ENCODE measurements at regions of chr5 and their contacts with region 1.

Region 1: DNA sequence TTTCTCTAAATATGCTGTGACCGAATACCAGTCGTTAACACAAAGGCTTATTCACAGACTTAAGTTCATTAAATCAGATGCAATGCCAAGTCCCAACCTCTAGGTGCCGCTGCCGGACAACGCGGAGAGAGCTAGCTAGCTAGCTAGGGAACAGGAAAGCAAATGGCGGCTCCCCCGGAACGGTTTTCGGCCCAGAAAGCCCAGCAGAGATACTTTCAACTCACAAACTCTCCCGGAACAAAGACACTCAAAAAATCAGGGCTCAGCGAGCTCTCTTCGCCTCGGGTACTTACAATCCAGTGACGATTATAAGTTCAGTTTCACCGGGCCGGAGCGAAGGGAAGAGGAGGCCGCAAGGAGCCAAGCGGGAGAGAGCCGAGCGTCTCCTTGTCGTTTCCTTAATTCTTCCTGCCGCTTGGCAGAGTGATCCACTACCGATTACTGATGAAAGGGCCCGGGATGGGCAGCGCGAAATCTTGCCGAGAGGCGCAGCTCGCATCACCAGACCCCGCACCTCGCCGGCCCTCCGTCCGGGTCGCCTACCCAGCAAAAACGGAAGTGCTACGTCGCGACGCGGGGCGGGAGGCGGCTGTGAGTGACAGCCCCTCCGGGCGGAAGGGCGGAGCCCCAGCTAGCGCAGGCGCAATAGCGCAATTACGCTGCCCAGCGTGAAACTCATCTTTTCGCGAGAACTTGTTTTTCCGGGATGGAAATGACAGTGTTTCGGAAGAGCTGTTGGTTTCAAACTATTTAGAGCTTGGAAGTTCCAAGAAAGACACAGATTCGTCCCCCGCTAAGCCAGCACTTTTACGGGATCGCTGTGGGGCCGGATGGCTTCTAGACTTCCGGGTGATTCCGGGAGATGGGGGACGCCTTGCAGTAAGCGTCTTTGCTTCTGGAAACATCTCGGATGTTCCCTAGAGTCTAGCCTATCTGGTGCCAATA is at the start of gene TAF7:
- DNase-seq: peak; percentile 96
- ATAC-seq: peak; percentile 96
- H3K4me3 Mint-ChIP-seq: peak within 1 kb of the TSS; percentile 91
- H3K27ac Mint-ChIP-seq: peak within 1 kb of the TSS; percentile 100
- H3K4me1 Mint-ChIP-seq: peaks cover 23% of the 10 kb centered on the region
- H3K27me3 Mint-ChIP-seq: peaks cover 2% of the 10 kb centered on the region
- total RNA-seq, gene TAF7: 45.2 to 54.4 TPM

Region 2: GRCh38 chr5:140639148-140639979 is 681.1 kb before region 1 on chr5 and contains the start of gene TMCO6:
- CTCF ChIA-PET with region 1: no interaction called
- POLR2A ChIA-PET with region 1: no interaction called
- intact Hi-C with region 1: loop called in 1 of 2 experiments (anchors 5 kb)
- DNase-seq: peak; percentile 99
- ATAC-seq: peak; percentile 94
- H3K4me3 Mint-ChIP-seq: peak within 1 kb of the TSS; percentile 93
- H3K27ac Mint-ChIP-seq: peak within 1 kb of the TSS; percentile 95
- H3K4me1 Mint-ChIP-seq: peaks cover 39% of the 10 kb centered on the region
- H3K27me3 Mint-ChIP-seq: no peaks in the 10 kb centered on the region
- total RNA-seq, gene TMCO6: 36.5 to 36.6 TPM

Region 3: GRCh38 chr5:140764177-140765020 is 556.1 kb before region 1 on chr5:
- CTCF ChIA-PET with region 1: no interaction called
- POLR2A ChIA-PET with region 1: no interaction called
- intact Hi-C with region 1: loop called in 1 of 2 experiments (anchors 5 kb)
- DNase-seq: no peak
- ATAC-seq: no peak
- H3K4me3 Mint-ChIP-seq: no peak overlapping the region
- H3K27ac Mint-ChIP-seq: no peak overlapping the region
- H3K4me1 Mint-ChIP-seq: no peaks in the 10 kb centered on the region
- H3K27me3 Mint-ChIP-seq: no peaks in the 10 kb centered on the region

Region 4: DNA sequence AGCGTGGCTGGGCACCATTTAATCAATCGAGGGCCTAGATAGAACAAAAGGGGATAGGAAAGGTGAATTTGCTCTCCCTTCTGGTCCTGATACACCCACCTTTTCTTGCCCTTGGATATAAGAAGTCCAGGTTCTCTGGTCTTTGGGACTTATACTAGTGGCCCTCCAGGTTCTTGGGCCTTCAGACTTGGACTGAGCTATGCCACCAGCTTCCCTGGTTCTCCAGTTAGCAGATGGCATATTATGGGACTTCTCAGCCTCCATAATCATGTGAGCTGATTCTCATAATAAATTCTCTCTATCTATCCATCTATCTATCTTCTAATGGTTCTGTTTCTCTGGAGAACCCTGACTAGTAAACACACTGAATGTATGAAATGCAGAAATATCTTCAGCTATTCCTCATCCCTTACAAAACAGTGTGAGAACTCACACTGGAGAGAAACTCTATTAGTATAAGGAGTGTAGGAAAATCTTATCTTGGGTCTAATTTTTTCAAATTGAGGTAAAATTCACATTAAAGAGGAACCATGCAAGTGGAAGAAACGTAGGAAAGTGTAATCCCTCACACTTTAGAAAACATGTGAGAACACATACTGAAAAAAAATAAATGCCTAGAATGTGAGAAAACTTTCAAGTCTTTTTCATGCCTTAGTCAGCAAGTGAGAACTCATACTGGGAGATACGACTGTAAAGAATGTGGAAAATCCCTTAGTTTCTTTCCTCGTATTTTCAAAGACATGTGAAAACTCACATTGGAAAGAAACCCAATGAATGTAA is 59.8 kb before region 1 on chr5:
- CTCF ChIA-PET with region 1: interaction called, 3 read pairs
- POLR2A ChIA-PET with region 1: no interaction called
- intact Hi-C with region 1: loop called in 1 of 2 experiments (anchors 2 kb)
- DNase-seq: no peak
- ATAC-seq: no peak
- H3K4me3 Mint-ChIP-seq: no peak overlapping the region
- H3K27ac Mint-ChIP-seq: no peak overlapping the region
- H3K4me1 Mint-ChIP-seq: no peaks in the 10 kb centered on the region
- H3K27me3 Mint-ChIP-seq: no peaks in the 10 kb centered on the region

Region 5: DNA sequence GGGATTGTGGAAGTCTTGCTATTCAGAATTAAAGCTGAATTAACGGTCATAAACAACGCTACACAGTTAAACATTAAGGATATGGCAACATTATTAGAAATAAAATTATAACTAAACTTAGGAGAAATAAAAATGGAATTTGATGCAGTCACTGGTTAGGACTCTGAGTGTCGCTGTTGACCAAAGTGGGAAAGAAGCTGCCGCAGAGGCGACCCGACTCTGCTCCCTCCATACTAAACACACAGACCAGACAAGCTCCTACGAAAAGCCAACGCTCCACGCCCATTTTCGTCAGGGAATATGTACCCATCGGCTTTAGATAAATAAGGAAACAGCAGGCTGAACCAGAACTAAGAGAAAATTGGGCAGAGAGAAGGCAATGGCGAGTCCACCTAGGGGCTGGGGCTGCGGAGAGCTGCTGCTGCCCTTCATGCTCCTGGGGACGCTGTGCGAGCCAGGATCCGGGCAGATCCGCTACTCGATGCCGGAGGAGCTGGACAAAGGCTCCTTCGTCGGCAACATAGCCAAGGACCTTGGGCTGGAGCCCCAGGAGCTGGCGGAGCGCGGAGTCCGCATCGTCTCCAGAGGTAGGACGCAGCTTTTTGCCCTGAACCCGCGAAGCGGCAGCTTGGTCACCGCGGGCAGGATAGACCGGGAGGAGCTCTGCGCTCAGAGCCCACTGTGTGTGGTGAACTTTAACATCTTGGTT is 43.6 kb after region 1 on chr5 and contains the start of gene PCDHGA5:
- CTCF ChIA-PET with region 1: no interaction called
- POLR2A ChIA-PET with region 1: no interaction called
- intact Hi-C with region 1: no loop called
- DNase-seq: no peak
- ATAC-seq: no peak
- H3K4me3 Mint-ChIP-seq: no peak within 1 kb of the TSS
- H3K27ac Mint-ChIP-seq: no peak within 1 kb of the TSS
- H3K4me1 Mint-ChIP-seq: peaks cover 2% of the 10 kb centered on the region
- H3K27me3 Mint-ChIP-seq: peaks cover 71% of the 10 kb centered on the region
- total RNA-seq, gene PCDHGA5: 0.07 to 0.09 TPM

Region 6: DNA sequence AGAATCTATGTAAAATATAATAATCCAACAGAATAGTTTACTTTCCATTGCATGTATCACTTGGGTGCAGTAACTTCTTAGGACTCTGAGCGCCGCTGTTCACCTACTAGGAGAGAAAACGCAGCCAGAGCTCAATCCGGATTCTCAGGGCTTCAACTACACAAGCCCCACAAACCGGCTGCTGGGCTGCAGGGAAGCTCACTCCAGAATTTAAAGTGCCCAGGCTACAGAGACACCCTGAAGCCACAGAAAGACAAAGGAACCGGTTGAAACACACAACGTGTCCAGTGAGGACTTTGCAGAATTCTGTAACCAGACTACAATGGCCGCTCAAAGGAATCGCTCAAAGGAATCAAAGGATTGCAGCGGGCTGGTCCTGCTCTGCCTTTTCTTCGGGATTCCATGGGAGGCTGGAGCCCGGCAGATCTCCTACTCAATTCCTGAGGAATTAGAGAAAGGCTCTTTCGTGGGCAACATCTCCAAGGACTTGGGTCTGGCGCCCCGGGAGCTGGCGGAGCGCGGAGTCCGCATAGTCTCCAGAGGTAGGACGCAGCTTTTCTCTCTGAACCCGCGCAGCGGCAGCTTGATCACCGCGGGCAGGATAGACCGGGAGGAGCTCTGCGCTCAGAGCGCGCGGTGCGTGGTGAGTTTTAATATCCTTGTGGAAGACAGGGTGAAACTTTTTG is 92.5 kb after region 1 on chr5 and contains the start of gene PCDHGA10:
- CTCF ChIA-PET with region 1: interaction called, 10 read pairs
- POLR2A ChIA-PET with region 1: no interaction called
- intact Hi-C with region 1: no loop called
- DNase-seq: peak; percentile 74
- ATAC-seq: peak; percentile 76
- H3K4me3 Mint-ChIP-seq: peak within 1 kb of the TSS; percentile 62
- H3K27ac Mint-ChIP-seq: no peak within 1 kb of the TSS
- H3K4me1 Mint-ChIP-seq: peaks cover 10% of the 10 kb centered on the region
- H3K27me3 Mint-ChIP-seq: peaks cover 63% of the 10 kb centered on the region
- total RNA-seq, gene PCDHGA10: 0.07 TPM in 1 of 2 experiments, not detected in the other

Region 7: DNA sequence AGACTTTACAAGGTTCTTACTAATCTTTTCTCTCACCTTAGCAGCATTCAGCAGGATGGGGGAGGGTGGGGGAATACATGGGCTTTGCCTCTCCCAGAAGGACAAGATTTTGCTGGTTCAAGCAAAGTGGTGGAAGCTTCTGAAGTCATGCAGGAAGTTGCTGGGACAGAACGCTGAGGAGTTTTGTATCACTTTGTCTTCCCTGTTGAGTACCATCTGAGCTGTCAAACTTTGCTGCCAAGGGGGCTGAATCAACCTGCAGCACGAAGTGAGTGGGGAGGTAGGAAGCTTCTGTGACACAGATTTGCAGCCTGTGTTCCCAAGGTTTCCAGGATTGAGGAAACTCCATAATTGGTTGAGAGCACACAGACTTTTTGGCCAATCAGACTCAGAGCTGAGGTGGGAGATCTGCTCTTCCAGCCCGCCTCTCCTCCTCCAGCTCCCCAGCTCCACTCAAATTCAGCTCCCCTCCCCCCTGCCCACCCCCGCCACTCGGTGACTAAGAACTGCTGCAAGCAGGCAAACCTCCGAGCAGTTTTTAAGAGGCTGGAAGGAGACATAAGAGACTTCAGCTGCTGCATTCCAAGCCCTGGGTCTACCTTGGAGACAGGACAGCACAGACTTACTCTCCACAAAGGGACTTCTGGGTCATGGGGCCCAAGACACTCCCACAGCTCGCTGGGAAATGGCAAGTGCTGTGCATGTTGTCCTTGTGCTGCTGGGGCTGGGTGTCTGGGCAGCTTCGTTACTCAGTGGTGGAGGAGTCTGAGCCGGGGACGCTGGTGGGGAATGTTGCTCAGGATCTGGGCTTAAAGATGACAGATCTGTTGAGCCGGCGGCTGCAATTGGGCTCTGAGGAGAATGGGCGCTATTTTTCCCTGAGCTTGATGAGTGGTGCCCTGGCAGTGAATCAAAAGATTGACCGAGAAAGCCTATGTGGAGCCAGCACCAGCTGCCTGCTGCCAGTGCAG is 168.4 kb after region 1 on chr5 and contains the start of gene PCDHGC5:
- CTCF ChIA-PET with region 1: no interaction called
- POLR2A ChIA-PET with region 1: no interaction called
- intact Hi-C with region 1: no loop called
- DNase-seq: no peak
- ATAC-seq: no peak
- H3K4me3 Mint-ChIP-seq: no peak within 1 kb of the TSS
- H3K27ac Mint-ChIP-seq: no peak within 1 kb of the TSS
- H3K4me1 Mint-ChIP-seq: peaks cover 17% of the 10 kb centered on the region
- H3K27me3 Mint-ChIP-seq: peaks cover 76% of the 10 kb centered on the region
- total RNA-seq, gene PCDHGC5: not detected

Region 8: DNA sequence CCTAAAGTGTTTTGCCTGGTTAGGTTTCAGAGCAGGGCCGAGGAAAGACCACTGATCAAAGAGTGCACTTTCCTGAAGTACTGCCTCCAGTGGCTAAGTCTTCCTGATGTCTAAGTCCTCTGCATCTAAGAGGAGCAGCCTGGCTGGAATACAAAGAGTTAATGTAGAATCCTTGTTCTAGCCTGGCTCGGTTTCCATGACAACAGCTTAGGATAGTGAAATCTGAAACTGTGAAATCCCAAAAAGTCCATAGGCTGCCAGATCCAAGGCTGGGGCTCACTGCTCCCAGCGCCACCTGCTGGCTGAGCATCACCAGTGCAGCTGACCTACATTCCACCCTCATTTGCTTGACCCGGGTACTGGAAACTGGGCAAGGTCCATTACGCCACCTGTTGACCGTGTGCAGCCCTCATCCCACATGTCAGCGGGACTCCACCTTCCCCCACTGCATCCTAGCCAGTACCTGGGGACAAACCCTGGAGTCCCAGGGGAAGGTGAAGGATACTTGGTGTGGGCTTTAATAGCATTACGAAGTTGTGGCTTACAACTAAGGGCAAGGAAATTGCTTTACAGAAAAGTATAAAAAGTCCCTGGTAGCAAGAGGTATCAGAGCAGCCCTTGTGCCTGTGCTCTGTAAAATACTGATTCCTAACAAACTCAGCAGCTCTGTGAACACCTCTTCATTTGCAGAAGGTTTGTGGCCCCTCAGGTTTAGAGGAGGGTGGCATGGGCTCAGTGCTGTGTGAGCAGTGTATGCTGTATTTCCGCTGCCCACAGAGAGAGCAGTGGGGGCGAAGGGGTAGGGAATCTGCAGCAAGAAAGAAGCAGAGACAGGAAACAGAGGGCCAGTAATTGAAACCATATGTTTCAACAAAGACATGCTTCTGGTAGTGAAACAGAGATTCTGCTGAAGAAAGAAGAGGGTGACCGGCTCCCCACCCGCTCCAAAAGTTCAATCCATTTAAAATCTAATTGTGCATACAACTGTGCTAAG is 204.4 kb after region 1 on chr5:
- CTCF ChIA-PET with region 1: interaction called, 3 read pairs
- POLR2A ChIA-PET with region 1: no interaction called
- intact Hi-C with region 1: loop called in 1 of 2 experiments (anchors 2 kb)
- DNase-seq: peak; percentile 67
- ATAC-seq: peak; percentile 62
- H3K4me3 Mint-ChIP-seq: no peak overlapping the region
- H3K27ac Mint-ChIP-seq: no peak overlapping the region
- H3K4me1 Mint-ChIP-seq: peaks cover 28% of the 10 kb centered on the region
- H3K27me3 Mint-ChIP-seq: no peaks in the 10 kb centered on the region

Region 9: DNA sequence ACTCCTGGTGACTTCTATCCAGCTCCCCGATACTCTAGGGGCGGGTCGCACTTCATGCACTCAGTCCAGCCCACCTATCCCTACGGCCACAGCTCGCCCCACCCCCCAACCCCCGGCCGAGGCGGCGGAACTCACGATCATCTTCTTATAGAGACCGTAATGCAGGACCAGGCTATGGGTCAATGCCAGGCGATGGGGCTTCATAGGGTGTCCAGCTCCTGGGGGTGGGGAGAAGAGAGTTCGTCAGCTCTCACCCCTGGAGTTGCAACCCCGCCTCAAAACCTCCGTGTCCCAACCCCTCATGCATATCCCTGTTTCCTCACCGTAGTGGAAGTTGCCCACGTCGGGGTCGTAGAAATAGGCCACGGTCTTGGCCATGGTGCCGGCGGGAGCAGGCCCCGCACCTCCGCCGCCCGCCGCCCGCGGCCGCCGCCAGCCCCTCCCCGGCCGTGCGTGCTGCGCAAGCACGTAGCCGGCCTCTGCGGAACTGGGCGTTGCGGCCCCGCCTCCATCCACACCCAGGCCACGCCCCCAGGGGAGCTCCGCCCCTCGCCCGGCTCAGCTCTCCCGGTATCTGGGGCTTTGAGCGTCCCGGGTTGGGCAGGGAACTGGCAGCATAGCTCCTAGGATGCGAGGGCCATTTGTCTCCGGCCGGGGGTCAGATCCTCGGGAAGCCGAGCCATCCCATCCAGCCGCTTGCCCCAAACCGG is 316.1 kb after region 1 on chr5 and contains the starts of genes HDAC3 and RELL2:
- CTCF ChIA-PET with region 1: no interaction called
- POLR2A ChIA-PET with region 1: no interaction called
- intact Hi-C with region 1: loop called in 1 of 2 experiments (anchors 5 kb)
- DNase-seq: peak; percentile 97
- ATAC-seq: peak; percentile 82
- H3K4me3 Mint-ChIP-seq: peak within 1 kb of the TSS; percentile 92
- H3K27ac Mint-ChIP-seq: peak within 1 kb of the TSS; percentile 92
- H3K4me1 Mint-ChIP-seq: peaks cover 45% of the 10 kb centered on the region
- H3K27me3 Mint-ChIP-seq: no peaks in the 10 kb centered on the region
- total RNA-seq, gene HDAC3: 85.9 to 88.6 TPM
- total RNA-seq, gene RELL2: 24.3 to 27.8 TPM

Measured in activated CD4-positive, alpha-beta T cell treated with anti-CD3 and anti-CD28 coated beads for 36 hours (primary cell).